H1 (cell line): ENCODE measurements at regions of chr10 and their contacts with region 1.

Region 1: GRCh38 chr10:102420810-102421644 is at the start of gene FBXL15:
- DNase-seq: peak; percentile 90 to 98
- H3K4me3 ChIP-seq: peak within 1 kb of the TSS; percentile 74 to 92 (median 80)
- H3K27ac ChIP-seq: peak within 1 kb of the TSS; percentile 81; the same call in 1 of the 2 replicates
- H3K4me1 ChIP-seq: peaks cover 0 to 24% (median 10%) of the 10 kb centered on the region in 4 experiments; a peak in 5 of 7 replicates
- H3K27me3 ChIP-seq: no peaks in the 10 kb centered on the region
- CTCF ChIP-seq: no peak; a peak in 1 of 4 replicates
- EP300 ChIP-seq: peak in 1 of 2 experiments; percentile 50; a peak in 1 of 3 replicates
- POLR2A ChIP-seq: peak in 1 of 2 experiments; percentile 57; a peak in 1 of 3 replicates
- RAD21 ChIP-seq: no peak
- total RNA-seq, gene FBXL15: 11.3 and 15.4 TPM in 2 replicates

Region 2: DNA sequence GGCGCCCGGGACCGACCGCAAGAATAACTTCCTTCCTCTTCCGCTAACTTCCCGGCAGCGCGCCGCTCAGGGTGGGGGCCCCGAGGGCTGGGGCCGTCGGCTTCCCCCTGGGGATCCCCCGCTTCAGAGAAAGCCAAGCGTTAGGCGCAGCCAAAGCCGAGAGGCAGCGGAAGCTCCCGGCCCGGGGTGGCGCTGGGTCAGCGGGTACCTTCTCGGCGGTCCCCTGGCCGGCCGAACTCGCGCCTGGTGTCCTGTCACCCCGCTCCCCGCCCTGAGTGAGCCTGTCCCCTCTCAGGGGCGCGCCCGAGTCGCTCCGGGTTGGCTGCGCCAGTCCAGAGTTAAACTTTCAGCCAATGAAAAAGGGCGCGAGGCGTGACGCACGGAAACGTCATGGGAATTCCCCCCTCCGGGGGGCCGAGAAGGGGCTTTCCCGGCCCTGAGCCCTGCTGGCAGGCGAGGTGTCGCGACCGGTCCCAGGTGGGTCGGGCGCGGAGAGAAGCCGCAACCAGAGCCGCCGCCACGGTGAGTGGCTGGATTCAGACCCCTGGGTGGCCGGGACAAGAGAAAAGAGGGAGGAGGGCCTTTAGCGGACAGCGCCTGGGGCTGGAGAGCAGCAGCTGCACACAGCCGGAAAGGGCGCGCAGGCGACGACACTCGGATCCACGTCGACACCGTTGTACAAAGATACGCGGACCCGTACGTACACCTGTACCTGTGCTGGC is 26.8 kb before region 1 on chr10:
- CTCF ChIA-PET with region 1: interaction called, 205 read pairs
- POLR2A ChIA-PET with region 1: interaction called, 38 read pairs
- DNase-seq: peak; percentile 65 to 96
- H3K4me3 ChIP-seq: peak overlapping the region; percentile 29 to 69 (median 55)
- H3K27ac ChIP-seq: peak overlapping the region; percentile 69; the same call in 1 of the 2 replicates
- H3K4me1 ChIP-seq: peaks cover 0 to 17% (median 9%) of the 10 kb centered on the region in 4 experiments; a peak in 6 of 7 replicates
- H3K27me3 ChIP-seq: peaks cover 0 to 22% (median 20%) of the 10 kb centered on the region in 4 experiments; a peak in 6 of 7 replicates
- CTCF ChIP-seq: peak in 1 of 3 experiments; percentile 96; a peak in 2 of 4 replicates
- EP300 ChIP-seq: peak in 1 of 2 experiments; percentile 89; a peak in 1 of 3 replicates
- POLR2A ChIP-seq: no peak; a peak in 1 of 3 replicates
- RAD21 ChIP-seq: peak; percentile 69 to 81

Region 3: GRCh38 chr10:102408728-102409603 is 12.1 kb before region 1 on chr10:
- CTCF ChIA-PET with region 1: interaction called, 205 read pairs
- POLR2A ChIA-PET with region 1: interaction called, 51 read pairs
- DNase-seq: peak in 1 of 2 experiments; percentile 67
- H3K4me3 ChIP-seq: peak overlapping the region; percentile 55 to 70 (median 57)
- H3K27ac ChIP-seq: no peak overlapping the region
- H3K4me1 ChIP-seq: peaks cover 9 to 31% (median 22%) of the 10 kb centered on the region in 4 experiments
- H3K27me3 ChIP-seq: peaks cover 17 to 52% (median 50%) of the 10 kb centered on the region in 4 experiments
- CTCF ChIP-seq: peak in 1 of 3 experiments; percentile 6; a peak in 1 of 4 replicates
- EP300 ChIP-seq: no peak; a peak in 1 of 3 replicates
- POLR2A ChIP-seq: no peak
- RAD21 ChIP-seq: no peak; a peak in 1 of 4 replicates

Region 4: DNA sequence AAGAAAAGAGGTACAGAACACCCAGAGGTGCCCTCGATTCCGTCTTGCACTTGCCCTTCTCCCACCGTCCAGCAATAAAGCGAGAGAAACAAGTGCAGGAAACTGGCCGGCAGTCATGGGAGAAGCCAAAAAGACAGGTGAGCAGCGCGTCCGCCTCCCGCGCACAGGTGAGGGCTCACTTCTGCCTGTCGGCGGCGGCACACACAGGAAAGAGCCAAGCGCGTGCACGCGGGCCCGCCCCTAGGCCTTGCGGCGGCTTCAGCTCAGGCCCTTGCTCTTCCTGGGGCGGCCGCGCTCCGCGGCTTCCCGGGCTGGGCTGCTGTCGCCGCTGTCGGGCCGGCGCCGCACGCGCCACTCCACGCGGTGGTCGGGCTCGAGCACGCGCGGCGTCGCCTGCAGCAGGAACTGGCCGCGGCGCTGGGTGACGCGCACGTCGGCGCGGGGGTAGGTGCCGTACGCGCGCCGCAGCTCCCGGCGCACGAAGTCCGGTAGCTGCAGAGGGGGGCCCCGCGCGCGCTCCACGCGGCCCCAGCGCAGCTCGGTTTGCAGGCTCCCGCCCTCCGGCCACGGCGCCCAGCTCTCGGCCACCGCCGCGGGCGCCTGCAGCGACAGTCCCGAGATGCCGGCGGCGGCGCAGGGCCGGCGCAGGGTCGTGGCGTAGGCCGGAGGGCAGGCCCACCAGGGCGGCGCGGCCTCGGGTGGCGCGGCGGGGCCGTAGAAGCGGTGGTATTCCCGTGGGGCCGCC is 29.3 kb after region 1 on chr10:
- CTCF ChIA-PET with region 1: interaction called, 37 read pairs
- POLR2A ChIA-PET with region 1: interaction called, 54 read pairs
- DNase-seq: peak in 1 of 2 experiments; percentile 84
- H3K4me3 ChIP-seq: peak overlapping the region; percentile 87 to 99 (median 98)
- H3K27ac ChIP-seq: peak overlapping the region; percentile 72
- H3K4me1 ChIP-seq: peaks cover 5 to 26% (median 18%) of the 10 kb centered on the region in 4 experiments
- H3K27me3 ChIP-seq: no peaks in the 10 kb centered on the region
- CTCF ChIP-seq: no peak
- EP300 ChIP-seq: no peak
- POLR2A ChIP-seq: no peak; a peak in 1 of 3 replicates
- RAD21 ChIP-seq: no peak; a peak in 1 of 4 replicates

Region 5: GRCh38 chr10:102485093-102485784 is 64.2 kb after region 1 on chr10:
- CTCF ChIA-PET with region 1: interaction called, 77 read pairs
- POLR2A ChIA-PET with region 1: interaction called, 11 read pairs
- DNase-seq: no peak
- H3K4me3 ChIP-seq: no peak overlapping the region
- H3K27ac ChIP-seq: no peak overlapping the region
- H3K4me1 ChIP-seq: no peaks in the 10 kb centered on the region
- H3K27me3 ChIP-seq: no peaks in the 10 kb centered on the region
- CTCF ChIP-seq: no peak
- EP300 ChIP-seq: no peak
- POLR2A ChIP-seq: no peak
- RAD21 ChIP-seq: no peak